ENCODE measurements at regions of chr19 and their contacts with region 1.

Region 1: DNA sequence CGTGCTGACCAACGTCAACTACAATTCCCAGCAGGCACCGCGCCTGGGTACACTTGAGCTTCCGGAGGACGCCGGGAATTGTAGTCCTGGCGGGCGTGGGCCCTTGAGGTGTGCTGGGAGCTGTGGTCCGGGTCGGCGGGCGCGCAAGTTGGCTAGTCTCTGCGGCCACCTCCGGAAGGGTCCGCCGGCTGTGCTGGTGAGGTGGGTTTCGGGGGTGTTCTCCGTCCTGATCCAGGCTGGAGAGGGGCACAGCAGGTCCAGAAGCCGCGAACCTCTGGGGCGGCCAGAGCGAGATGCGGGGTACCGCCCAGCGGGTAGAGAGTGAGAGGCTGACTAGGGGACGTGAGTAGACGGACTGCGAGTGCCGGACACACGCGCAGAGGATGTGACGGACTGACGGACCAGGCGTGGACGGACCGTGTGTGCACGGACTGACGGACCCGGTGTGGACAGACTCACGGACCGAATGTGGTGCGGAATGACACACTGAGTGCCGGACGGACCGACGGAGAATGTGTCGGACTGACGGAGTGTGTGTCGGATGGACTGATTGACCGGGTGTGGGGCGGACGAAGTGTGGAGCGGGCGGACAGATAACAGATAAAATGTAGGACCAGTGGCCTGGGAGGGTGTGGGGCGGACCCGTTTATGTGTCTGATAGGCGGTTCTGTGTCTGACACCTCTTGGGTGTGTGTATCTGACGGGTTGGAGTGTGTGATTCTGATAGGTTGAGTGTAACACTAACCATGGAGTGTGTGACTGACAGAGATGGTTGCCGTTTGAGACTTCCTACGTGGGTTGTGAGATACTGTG is at the start of gene ZSCAN22:
- DNase-seq: peak; percentile 94
- H3K4me3 ChIP-seq: peak within 1 kb of the TSS; percentile 70 to 89
- H3K27ac ChIP-seq: peak within 1 kb of the TSS; percentile 83 to 90
- H3K4me1 ChIP-seq: peaks cover 0 to 19% of the 10 kb centered on the region in 2 experiments; a peak in 1 of 4 replicates
- H3K27me3 ChIP-seq: no peaks in the 10 kb centered on the region
- CTCF ChIP-seq: no peak
- EP300 ChIP-seq: no peak; a peak in 1 of 4 replicates
- RAD21 ChIP-seq: no peak
- polyA plus RNA-seq, gene ZSCAN22: 2.3 and 2.9 TPM in 2 replicates

Region 2: DNA sequence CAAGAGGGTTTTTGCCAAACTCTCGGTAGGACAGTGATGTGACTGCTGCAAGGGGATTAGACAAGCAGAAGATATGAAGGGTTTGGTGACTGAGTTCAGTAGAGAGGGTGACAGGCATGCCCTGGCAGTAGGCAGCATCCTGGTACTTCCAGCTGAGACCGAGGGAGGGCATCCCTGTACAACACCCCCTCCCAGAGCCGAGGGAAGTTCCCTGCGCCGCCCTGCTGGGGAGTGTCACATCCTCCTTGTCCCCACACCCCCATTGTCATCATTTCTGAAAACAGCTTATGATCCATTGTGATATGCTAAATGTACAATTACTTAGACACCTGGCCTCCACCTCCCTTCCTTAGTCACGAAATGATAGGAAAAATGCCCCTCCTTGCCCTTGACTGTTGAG is 83.8 kb before region 1 on chr19:
- CTCF ChIA-PET with region 1: no interaction called
- POLR2A ChIA-PET with region 1: no interaction called
- DNase-seq: no peak
- H3K4me3 ChIP-seq: no peak overlapping the region
- H3K27ac ChIP-seq: no peak overlapping the region
- H3K4me1 ChIP-seq: no peaks in the 10 kb centered on the region
- H3K27me3 ChIP-seq: no peaks in the 10 kb centered on the region
- CTCF ChIP-seq: no peak
- EP300 ChIP-seq: no peak
- RAD21 ChIP-seq: no peak

Region 3: GRCh38 chr19:58294743-58295374 is 32.3 kb before region 1 on chr19:
- CTCF ChIA-PET with region 1: no interaction called
- POLR2A ChIA-PET with region 1: no interaction called
- DNase-seq: no peak
- H3K4me3 ChIP-seq: no peak overlapping the region; a peak in 1 of 4 replicates
- H3K27ac ChIP-seq: no peak overlapping the region
- H3K4me1 ChIP-seq: no peaks in the 10 kb centered on the region
- H3K27me3 ChIP-seq: no peaks in the 10 kb centered on the region
- CTCF ChIP-seq: no peak
- EP300 ChIP-seq: no peak
- RAD21 ChIP-seq: no peak

Region 4: GRCh38 chr19:58305065-58305931 is 21.8 kb before region 1 on chr19 and contains the start of gene ERVK3-1:
- CTCF ChIA-PET with region 1: interaction called, 3 read pairs
- POLR2A ChIA-PET with region 1: interaction called, 12 read pairs
- DNase-seq: peak; percentile 94
- H3K4me3 ChIP-seq: peak within 1 kb of the TSS; percentile 79 to 97
- H3K27ac ChIP-seq: peak within 1 kb of the TSS; percentile 73 to 86
- H3K4me1 ChIP-seq: peaks cover 0 to 16% of the 10 kb centered on the region in 2 experiments; a peak in 2 of 4 replicates
- H3K27me3 ChIP-seq: no peaks in the 10 kb centered on the region
- CTCF ChIP-seq: no peak
- EP300 ChIP-seq: peak in 1 of 2 experiments; percentile 22; a peak in 1 of 4 replicates
- RAD21 ChIP-seq: no peak
- polyA plus RNA-seq, gene ERVK3-1: 69.4 and 85.3 TPM in 2 replicates

Region 5: DNA sequence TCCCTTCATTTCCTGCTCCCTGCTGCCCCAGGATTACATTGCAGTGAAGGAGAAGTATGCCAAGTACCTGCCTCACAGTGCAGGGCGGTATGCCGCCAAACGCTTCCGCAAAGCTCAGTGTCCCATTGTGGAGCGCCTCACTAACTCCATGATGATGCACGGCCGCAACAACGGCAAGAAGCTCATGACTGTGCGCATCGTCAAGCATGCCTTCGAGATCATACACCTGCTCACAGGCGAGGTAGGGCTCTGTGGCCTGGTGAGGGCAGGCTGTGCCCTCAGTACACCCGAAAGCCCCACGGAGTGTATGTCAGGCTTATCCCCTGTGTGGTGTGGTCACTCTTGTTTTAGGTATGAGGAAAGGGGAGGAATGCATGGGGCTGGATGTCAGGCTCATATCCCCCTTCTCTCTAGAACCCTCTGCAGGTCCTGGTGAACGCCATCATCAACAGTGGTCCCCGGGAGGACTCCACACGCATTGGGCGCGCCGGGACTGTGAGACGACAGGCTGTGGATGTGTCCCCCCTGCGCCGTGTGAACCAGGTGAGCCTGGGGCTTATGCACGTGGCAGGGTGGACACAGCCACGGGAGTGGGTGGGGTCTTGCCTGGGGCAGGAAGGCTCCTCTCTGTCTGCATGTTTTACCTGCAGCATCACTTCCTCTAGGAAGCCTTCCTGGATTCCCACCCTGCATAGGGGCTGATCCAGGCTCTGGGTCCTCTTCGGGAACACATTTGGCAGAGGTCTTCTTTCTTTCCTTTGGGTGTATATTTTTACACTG is 66.0 kb after region 1 on chr19:
- CTCF ChIA-PET with region 1: no interaction called
- POLR2A ChIA-PET with region 1: no interaction called
- DNase-seq: no peak
- H3K4me3 ChIP-seq: no peak overlapping the region
- H3K27ac ChIP-seq: no peak overlapping the region
- H3K4me1 ChIP-seq: peaks cover 7 to 8% of the 10 kb centered on the region in 2 experiments; a peak in 2 of 4 replicates
- H3K27me3 ChIP-seq: no peaks in the 10 kb centered on the region
- CTCF ChIP-seq: no peak
- EP300 ChIP-seq: no peak
- RAD21 ChIP-seq: no peak